Heart left ventricle (tissue), 16 donors: ENCODE measurements at regions of chr2 and their contacts with region 1.

Region 1: GRCh38 chr2:42053791-42054701 is 6.2 kb downstream of the PKDCC start:
- DNase-seq: peak; percentile 70 to 87 (median 72)
- ATAC-seq: peak; percentile 75 to 89 (median 82)
- H3K4me3 ChIP-seq: peak overlapping the region in 3 of 12 donors; percentile 4 to 66 (median 5)
- H3K27ac ChIP-seq: peak overlapping the region; percentile 82 to 95 (median 89)
- H3K4me1 ChIP-seq: peaks cover 17 to 83% (median 59%) of the 10 kb centered on the region in 12 donors
- H3K27me3 ChIP-seq: peaks cover 0 to 10% (median 0%) of the 10 kb centered on the region in 9 donors
- CTCF ChIP-seq: no peak
- POLR2A ChIP-seq: no peak

Region 2: DNA sequence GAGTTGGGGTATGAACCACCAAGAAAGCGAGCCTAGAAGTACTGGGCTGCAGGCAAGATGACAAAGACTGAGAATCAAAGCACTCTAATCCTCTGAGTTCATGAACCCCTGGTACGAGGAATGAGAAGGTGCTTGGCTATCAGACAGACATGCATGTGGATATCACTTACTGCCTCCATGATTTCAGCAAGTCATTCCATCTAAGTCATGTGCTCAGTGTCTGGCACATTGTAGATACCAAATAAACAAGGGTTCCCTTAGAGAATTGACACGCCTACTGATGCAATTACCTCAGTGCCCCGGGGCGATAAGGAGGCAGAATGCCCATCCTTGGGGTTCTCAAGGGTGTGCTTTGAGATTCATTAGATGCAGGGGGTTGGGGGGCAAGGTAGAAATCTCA is 131.9 kb before region 1 on chr2:
- intact Hi-C with region 1: loop called in 1 of 10 experiments (anchors 5 kb)
- DNase-seq: no peak
- ATAC-seq: peak; percentile 44 to 82 (median 68)
- H3K4me3 ChIP-seq: no peak overlapping the region
- H3K27ac ChIP-seq: peak overlapping the region in 5 of 12 donors; percentile 37 to 86 (median 60)
- H3K4me1 ChIP-seq: peaks cover 4 to 41% (median 23%) of the 10 kb centered on the region in 12 donors
- H3K27me3 ChIP-seq: no peaks in the 10 kb centered on the region
- CTCF ChIP-seq: no peak
- POLR2A ChIP-seq: no peak

Region 3: GRCh38 chr2:41933585-41934320 is 120.3 kb before region 1 on chr2:
- intact Hi-C with region 1: loop called in 5 of 10 experiments (anchors 5 kb)
- DNase-seq: no peak
- ATAC-seq: peak in 3 of 4 donors; percentile 12 to 53 (median 20)
- H3K4me3 ChIP-seq: no peak overlapping the region
- H3K27ac ChIP-seq: peak overlapping the region; percentile 12 to 78 (median 61)
- H3K4me1 ChIP-seq: peaks cover 0 to 64% (median 34%) of the 10 kb centered on the region in 12 donors
- H3K27me3 ChIP-seq: no peaks in the 10 kb centered on the region
- CTCF ChIP-seq: no peak
- POLR2A ChIP-seq: no peak

Region 4: DNA sequence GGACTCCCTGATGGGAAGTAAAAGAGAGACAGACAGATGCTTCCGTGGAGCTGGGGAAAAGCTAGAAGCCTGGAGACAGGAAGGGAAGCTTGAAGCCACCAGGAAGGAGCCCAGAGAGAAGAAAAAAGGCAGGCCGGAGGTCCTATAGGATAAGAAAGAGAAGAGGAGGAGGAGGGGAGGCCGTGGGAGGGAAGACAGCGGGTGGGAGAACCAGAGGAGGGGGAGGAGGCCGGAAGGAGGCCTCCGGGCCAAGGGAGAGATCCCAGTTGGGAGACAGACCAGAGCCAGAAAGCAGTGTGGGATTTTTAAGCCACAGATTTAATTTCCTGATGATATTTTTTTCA is 113.3 kb before region 1 on chr2:
- intact Hi-C with region 1: loop called in 6 of 10 experiments (anchors 5 kb)
- DNase-seq: peak in 4 of 5 donors; percentile 64 to 72 (median 71)
- ATAC-seq: peak in 2 of 4 donors; percentile 33 to 64
- H3K4me3 ChIP-seq: no peak overlapping the region
- H3K27ac ChIP-seq: peak overlapping the region; percentile 22 to 86 (median 56)
- H3K4me1 ChIP-seq: peaks cover 0 to 85% (median 35%) of the 10 kb centered on the region in 12 donors
- H3K27me3 ChIP-seq: no peaks in the 10 kb centered on the region
- CTCF ChIP-seq: no peak
- POLR2A ChIP-seq: no peak

Region 5: DNA sequence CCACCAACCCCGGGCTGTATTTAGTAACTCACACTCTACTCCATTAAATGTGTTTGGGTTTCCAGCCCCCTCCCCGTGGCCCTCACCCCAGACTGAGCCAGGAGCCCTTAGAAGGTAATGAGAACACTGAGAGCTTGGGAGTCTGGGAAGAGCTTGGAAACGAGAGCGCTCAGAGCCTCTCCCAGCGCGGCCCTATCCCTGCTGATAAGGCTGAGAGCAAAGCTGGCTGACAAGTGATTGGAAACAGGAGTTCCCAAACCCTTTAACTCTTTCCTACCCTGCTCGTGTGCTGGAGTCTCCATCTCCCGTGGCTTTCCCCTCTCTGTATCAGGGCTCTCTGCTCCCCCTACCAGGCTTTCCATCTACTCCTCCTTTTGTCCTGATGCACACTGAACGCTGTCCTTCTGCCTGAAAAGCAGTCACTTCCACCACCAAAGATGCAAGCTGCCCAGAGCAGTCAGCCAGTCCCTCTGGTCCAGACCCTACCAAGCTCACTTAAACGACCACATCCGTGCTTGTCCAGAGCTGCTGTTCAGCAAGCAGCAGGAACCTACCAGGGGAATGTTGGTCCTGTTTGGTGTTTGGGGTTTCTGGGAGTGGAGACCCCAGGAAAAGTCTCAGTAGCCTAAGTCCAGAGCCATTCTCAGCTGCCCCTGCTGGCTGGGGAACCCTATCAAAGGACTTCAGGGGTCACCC is 106.2 kb before region 1 on chr2:
- intact Hi-C with region 1: loop called in 7 of 10 experiments (anchors 5 to 10 kb)
- DNase-seq: peak; percentile 67 to 83 (median 71)
- ATAC-seq: peak; percentile 95 to 98 (median 98)
- H3K4me3 ChIP-seq: no peak overlapping the region
- H3K27ac ChIP-seq: peak overlapping the region in 11 of 12 donors; percentile 10 to 90 (median 63)
- H3K4me1 ChIP-seq: peaks cover 0 to 54% (median 28%) of the 10 kb centered on the region in 12 donors
- H3K27me3 ChIP-seq: no peaks in the 10 kb centered on the region
- CTCF ChIP-seq: no peak
- POLR2A ChIP-seq: no peak